ENCODE measurements at regions of chr1 and their contacts with region 1.

Region 1: GRCh38 chr1:47432071-47433036 is 5.5 kb upstream of the FOXD2 start:
- DNase-seq: peak; percentile 74 to 91 (median 85)
- H3K4me3 ChIP-seq: peak overlapping the region in 1 of 4 donors; percentile 38
- H3K27ac ChIP-seq: peak overlapping the region in 1 of 5 donors; percentile 64
- H3K4me1 ChIP-seq: peaks cover 0 to 28% of the 10 kb centered on the region in 2 donors
- H3K27me3 ChIP-seq: peaks cover 35% of the 10 kb centered on the region
- CTCF ChIP-seq: peak; percentile 55 to 81 (median 76)
- POLR2A ChIP-seq: no peak

Region 2: GRCh38 chr1:47023302-47024140 is 408.8 kb before region 1 on chr1 and contains the start of gene CYP4X1:
- intact Hi-C with region 1: no loop called
- DNase-seq: peak in 5 of 7 donors; percentile 6 to 29 (median 23)
- H3K4me3 ChIP-seq: peak within 1 kb of the TSS in 1 of 4 donors; percentile 28
- H3K27ac ChIP-seq: peak within 1 kb of the TSS in 2 of 5 donors; percentile 63 to 77
- H3K4me1 ChIP-seq: peaks cover 0 to 7% of the 10 kb centered on the region in 2 donors
- H3K27me3 ChIP-seq: peaks cover 7% of the 10 kb centered on the region
- CTCF ChIP-seq: no peak
- POLR2A ChIP-seq: no peak
- total RNA-seq, gene CYP4X1: 0.74 to 5.4 (median 2.1) TPM

Region 3: DNA sequence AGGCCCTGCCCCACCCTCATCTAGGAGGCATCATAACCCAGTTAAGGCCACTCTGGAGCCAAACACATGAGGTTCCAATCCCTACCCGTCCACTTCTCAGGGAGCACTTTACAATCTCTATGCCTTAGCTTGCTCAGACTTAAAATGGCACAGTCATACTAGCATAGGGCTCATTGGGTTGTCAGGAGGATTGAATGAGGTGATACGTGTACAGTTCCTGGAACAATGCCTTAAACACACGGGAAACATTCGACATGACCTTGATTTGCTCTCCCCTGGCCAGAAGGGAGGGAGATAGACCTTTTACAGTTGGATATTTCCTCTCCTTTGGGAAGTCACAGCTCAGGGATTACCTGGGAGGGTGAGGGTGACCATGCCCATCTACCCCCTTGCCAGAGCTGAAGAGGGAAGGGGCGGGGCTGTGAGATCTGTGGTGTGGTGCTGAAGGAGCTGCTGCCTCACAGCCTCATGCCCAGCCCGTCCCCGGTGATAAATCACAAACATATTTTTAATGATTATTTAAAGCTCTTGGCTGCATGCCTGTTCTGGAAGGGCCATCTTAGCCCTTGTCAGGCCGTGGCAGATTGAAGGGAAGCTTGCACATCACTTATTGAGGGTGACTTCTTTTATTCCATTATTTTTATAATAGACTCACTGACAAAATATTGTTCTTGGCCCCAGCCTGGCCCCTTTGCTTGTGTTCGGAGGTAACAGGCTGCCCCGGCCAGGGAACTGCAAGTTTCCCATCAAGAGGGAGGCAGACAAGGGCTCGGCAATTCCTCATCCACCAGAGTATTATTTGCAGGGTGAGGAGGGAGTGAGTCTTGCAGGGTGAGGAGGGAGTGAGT is 88.9 kb after region 1 on chr1:
- intact Hi-C with region 1: no loop called
- DNase-seq: peak in 6 of 7 donors; percentile 30 to 75 (median 56)
- H3K4me3 ChIP-seq: no peak overlapping the region
- H3K27ac ChIP-seq: peak overlapping the region in 3 of 5 donors; percentile 52 to 70 (median 58)
- H3K4me1 ChIP-seq: peaks cover 20 to 24% of the 10 kb centered on the region in 2 donors
- H3K27me3 ChIP-seq: no peaks in the 10 kb centered on the region
- CTCF ChIP-seq: no peak
- POLR2A ChIP-seq: no peak

Region 4: GRCh38 chr1:47710329-47711071 is 278.1 kb after region 1 on chr1:
- intact Hi-C with region 1: loop called (anchors 2 to 5 kb)
- DNase-seq: peak; percentile 60 to 86 (median 80)
- H3K4me3 ChIP-seq: peak overlapping the region in 1 of 4 donors; percentile 44
- H3K27ac ChIP-seq: no peak overlapping the region
- H3K4me1 ChIP-seq: peaks cover 0 to 20% of the 10 kb centered on the region in 2 donors
- H3K27me3 ChIP-seq: peaks cover 56% of the 10 kb centered on the region
- CTCF ChIP-seq: peak; percentile 81 to 99 (median 98)
- POLR2A ChIP-seq: no peak

Region 5: GRCh38 chr1:47725000-47725473 is 292.7 kb after region 1 on chr1:
- intact Hi-C with region 1: no loop called
- DNase-seq: no peak
- H3K4me3 ChIP-seq: no peak overlapping the region
- H3K27ac ChIP-seq: no peak overlapping the region
- H3K4me1 ChIP-seq: no peaks in the 10 kb centered on the region
- H3K27me3 ChIP-seq: peaks cover 27% of the 10 kb centered on the region
- CTCF ChIP-seq: peak in 2 of 6 experiments; percentile 21 to 22
- POLR2A ChIP-seq: no peak

Measured in adrenal gland (tissue), 19 donors.